OCI-LY7 (cell line): ENCODE measurements at regions of chr22 and their contacts with region 1.

Region 1: DNA sequence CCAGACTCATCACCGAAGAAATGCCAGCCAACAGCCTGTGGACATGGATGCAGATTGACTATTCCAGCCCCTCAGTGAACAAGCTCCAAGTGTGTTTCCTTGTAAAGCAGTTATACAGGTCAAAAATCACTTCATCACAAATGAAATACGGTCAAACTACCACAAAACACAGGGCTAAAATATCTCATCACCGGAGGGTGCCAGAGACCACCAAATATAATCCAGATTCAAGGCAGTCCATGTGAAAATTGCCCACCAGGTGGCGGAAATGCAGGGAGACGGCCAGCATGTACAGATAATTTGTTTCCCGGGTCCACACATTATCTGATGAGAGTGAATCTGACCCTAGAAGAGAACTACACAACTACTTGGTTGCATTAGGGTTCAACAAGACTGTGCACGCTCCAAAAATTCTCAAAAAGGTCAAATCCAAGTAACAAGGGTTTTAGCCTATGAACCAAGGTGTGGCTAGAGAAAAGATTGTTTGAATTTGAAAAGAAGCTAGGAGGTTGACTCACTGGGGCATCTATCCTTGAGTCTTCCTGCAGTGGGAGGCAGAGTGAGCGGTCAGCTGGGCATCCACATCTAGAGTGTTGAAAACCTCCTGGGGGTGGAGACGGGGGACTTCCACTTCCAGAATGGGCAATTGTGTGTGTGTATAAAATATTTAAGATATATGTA is 71.7 kb downstream of the IGLL5 start:
- DNase-seq: peak; percentile 93
- H3K4me3 ChIP-seq: no peak overlapping the region
- H3K27ac ChIP-seq: no peak overlapping the region
- H3K4me1 ChIP-seq: peaks cover 35% of the 10 kb centered on the region
- CTCF ChIP-seq: peak; percentile 100

Region 2: GRCh38 chr22:22770280-22770871 is 188.9 kb before region 1 on chr22:
- CTCF ChIA-PET with region 1: no interaction called
- POLR2A ChIA-PET with region 1: no interaction called
- intact Hi-C with region 1: loop called (anchors 5 kb)
- DNase-seq: peak; percentile 59
- H3K4me3 ChIP-seq: no peak overlapping the region
- H3K27ac ChIP-seq: no peak overlapping the region
- H3K4me1 ChIP-seq: peaks cover 20% of the 10 kb centered on the region
- CTCF ChIP-seq: peak; percentile 93

Region 3: DNA sequence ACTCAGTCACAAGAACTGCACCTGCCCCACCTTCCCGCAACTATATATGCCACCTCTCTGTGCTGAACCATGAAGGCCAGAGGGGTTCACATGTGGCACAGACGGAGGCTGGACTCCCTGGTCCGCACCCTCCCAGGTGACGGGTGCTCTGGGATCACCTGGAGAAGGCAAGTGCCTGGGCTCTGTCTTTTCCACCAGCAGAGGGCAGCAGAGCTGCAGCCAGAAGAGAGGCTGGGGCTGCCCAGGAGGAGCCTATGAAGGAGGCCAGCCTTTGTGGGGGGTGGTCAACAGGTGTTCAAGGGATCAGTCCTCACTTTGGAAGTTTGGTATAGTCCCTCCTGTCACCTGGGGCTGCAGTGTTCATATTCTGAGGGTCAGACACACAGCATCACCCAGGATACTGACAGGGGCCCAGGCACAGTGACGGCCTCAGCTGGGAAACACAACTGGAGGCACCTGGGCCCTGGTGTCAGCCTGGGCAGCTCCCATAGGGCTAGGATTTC is 110.9 kb before region 1 on chr22:
- CTCF ChIA-PET with region 1: interaction called, 12 read pairs
- POLR2A ChIA-PET with region 1: interaction called, 8 read pairs
- intact Hi-C with region 1: loop called (anchors 1 kb)
- DNase-seq: peak; percentile 79
- H3K4me3 ChIP-seq: no peak overlapping the region
- H3K27ac ChIP-seq: no peak overlapping the region
- H3K4me1 ChIP-seq: peaks cover 34% of the 10 kb centered on the region
- CTCF ChIP-seq: peak; percentile 99

Region 4: GRCh38 chr22:22884010-22884887 is 75.0 kb before region 1 on chr22:
- CTCF ChIA-PET with region 1: interaction called, 22 read pairs
- POLR2A ChIA-PET with region 1: interaction called, 3 read pairs
- intact Hi-C with region 1: loop called (anchors 1 kb)
- DNase-seq: peak; percentile 90
- H3K4me3 ChIP-seq: peak overlapping the region; percentile 15
- H3K27ac ChIP-seq: peak overlapping the region; percentile 5
- H3K4me1 ChIP-seq: peaks cover 87% of the 10 kb centered on the region
- CTCF ChIP-seq: peak; percentile 94

Region 5: DNA sequence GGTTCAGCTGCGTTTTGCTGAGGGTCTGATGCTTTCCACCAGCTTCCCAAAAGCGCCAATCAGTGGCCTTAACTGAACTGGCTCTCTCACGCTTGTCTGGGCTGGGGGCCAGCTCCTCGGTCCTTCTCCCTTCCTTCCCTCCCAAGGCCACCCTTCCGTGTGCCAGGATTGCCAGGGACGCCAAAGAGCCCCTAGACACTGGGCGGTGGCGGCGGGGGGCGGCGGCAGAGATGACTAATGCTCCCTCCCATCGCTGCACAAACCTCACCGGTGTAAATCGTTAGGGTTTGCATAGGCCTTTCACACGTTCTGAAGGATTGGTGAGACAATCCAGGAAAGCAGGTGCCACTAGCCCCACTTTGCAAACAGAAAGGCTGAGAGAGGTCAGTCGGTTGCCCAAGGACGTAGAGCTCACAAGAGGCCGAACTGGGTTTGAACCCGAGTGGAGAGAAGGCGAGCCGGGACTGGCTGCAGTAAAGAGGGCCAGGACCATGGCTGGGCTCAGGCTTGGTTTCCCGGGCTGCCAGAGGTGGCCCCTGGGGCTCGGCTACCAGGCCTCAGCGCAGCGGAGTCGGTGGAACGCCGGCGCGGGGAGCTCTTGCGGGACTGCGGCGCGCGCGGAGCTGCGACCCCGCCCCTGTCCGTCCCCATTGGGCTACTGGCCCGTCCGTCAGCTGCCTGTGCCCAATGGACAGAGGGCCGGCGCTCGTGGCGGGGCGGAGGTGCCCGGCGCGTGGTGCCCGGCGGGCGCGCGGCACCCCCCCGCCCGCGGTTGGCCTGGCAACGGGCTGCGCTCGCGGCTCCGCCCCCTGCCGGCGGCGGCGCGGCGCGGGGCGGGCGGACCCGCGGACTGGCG is 110.4 kb after region 1 on chr22:
- CTCF ChIA-PET with region 1: no interaction called
- POLR2A ChIA-PET with region 1: no interaction called
- intact Hi-C with region 1: loop called (anchors 2 kb)
- DNase-seq: peak; percentile 93
- H3K4me3 ChIP-seq: peak overlapping the region; percentile 62
- H3K27ac ChIP-seq: no peak overlapping the region
- H3K4me1 ChIP-seq: peaks cover 81% of the 10 kb centered on the region
- CTCF ChIP-seq: no peak

Region 6: GRCh38 chr22:23178512-23179254 is 219.4 kb after region 1 on chr22:
- CTCF ChIA-PET with region 1: interaction called, 3 read pairs
- POLR2A ChIA-PET with region 1: no interaction called
- intact Hi-C with region 1: loop called (anchors 1 kb)
- DNase-seq: peak; percentile 70
- H3K4me3 ChIP-seq: no peak overlapping the region
- H3K27ac ChIP-seq: peak overlapping the region; percentile 33
- H3K4me1 ChIP-seq: peaks cover 57% of the 10 kb centered on the region
- CTCF ChIP-seq: peak; percentile 99